H1 (cell line): ENCODE measurements at regions of chr19 and their contacts with region 1.

Region 1: DNA sequence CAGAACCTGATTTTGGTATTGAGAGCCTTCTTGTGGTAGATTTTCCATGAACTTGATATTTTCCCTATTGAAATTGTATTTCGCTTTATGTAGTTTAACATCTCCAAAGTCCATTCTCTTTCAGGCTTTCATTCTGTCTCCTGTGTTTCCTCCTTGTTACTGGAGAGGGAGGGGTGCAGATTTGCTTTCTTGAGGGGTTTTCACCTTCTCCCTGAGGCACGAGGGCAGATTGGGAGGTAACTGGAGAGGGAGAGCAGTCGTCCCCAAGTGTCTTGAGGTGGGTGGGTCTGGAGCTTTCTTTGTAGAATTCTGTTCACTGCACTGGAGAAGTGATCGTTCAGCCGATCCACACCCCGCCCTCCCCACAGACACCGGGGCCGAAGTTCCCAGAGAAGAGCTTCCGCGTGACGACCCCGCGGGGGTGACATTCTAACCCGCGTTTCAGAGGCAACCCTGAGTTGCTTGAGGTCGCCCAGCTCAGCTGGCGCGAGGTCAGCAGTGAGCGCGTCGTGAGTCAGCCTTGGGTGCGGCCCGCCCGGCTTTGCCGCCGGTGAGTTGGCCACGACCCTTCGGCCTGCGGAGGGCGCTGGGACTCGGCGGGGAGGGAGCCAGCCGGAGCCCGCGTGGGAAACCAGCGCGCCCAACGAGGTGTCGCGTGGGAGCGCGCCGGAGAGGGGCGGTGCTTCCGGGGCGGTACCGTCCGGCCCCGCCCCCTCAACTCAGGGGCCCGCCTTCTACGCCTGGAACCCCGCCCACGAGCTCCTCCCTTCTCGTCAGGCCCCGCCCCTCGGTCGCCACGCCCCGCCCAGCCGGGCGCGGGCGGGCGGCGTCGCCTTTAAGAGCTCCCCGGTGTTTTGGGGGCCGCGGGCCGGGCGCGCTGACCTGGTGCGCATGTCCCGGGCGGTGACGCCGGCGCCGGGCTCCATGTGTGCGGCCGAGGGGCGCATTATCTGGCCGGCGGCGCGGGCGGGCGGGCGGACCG is at the start of gene GATAD2A:
- DNase-seq: peak; percentile 66 to 98
- H3K4me3 ChIP-seq: peak within 1 kb of the TSS; percentile 55 to 95 (median 81)
- H3K27ac ChIP-seq: peak within 1 kb of the TSS; percentile 73; the same call in 1 of the 2 replicates
- H3K4me1 ChIP-seq: peaks cover 6 to 23% (median 20%) of the 10 kb centered on the region in 4 experiments; a peak in 6 of 7 replicates
- H3K27me3 ChIP-seq: no peaks in the 10 kb centered on the region
- CTCF ChIP-seq: no peak
- EP300 ChIP-seq: no peak
- POLR2A ChIP-seq: peak; percentile 37 to 75
- RAD21 ChIP-seq: no peak; a peak in 1 of 4 replicates
- total RNA-seq, gene GATAD2A: 205 and 210 TPM in 2 replicates

Region 2: GRCh38 chr19:19292607-19293006 is 112.6 kb before region 1 on chr19:
- CTCF ChIA-PET with region 1: no interaction called
- POLR2A ChIA-PET with region 1: no interaction called
- DNase-seq: no peak
- H3K4me3 ChIP-seq: no peak overlapping the region
- H3K27ac ChIP-seq: no peak overlapping the region
- H3K4me1 ChIP-seq: no peaks in the 10 kb centered on the region
- H3K27me3 ChIP-seq: no peaks in the 10 kb centered on the region
- CTCF ChIP-seq: no peak
- EP300 ChIP-seq: no peak
- POLR2A ChIP-seq: no peak
- RAD21 ChIP-seq: no peak

Region 3: DNA sequence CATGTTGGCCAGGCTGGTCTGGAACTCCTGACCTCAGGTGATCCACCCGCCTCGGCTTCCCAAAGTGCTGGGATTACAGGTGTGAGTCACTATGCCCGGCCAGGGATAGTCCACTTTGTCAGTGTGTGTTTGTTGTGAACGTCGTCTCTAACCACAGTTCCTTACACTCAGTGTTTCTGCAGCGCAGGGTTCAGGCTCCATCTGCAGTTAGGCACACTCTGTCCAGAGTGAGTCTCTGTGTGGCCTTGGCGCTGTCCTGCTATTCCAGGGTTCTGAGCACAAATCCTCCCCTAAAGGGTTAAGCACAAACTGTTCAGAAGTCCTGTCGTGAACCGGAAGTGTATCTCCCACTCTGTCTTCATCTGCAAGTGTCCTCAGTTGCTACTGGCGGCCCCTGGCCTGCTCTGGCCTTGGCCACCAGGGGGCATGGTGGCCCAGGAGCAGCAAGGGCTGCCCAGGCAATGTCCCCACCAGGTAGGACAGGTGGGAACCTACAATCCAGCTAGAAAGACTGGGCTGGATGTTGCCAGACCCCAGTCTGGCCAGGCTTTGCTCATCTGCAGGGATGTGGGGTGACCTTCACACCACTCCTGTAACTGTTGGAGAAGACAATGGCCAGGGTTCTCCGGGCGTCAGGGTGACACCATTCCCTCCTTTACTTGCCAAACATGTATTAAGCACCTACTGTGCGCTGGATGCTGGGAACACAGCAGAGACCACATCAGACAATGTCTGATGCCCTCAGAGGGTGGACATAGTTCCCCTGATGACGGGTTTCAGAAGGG is 38.4 kb before region 1 on chr19:
- CTCF ChIA-PET with region 1: interaction called, 8 read pairs
- POLR2A ChIA-PET with region 1: interaction called, 13 read pairs
- DNase-seq: peak; percentile 79 to 85
- H3K4me3 ChIP-seq: no peak overlapping the region
- H3K27ac ChIP-seq: no peak overlapping the region
- H3K4me1 ChIP-seq: peaks cover 0 to 2% (median 0%) of the 10 kb centered on the region in 4 experiments; a peak in 4 of 7 replicates
- H3K27me3 ChIP-seq: 0 out of 7 replicates have a peak, but pooled peaks cover 0 to 4% (median 0%) of the 10 kb centered on the region in 4 experiments
- CTCF ChIP-seq: peak; percentile 95 to 97 (median 96)
- EP300 ChIP-seq: no peak
- POLR2A ChIP-seq: no peak
- RAD21 ChIP-seq: peak; percentile 93 to 94

Region 4: DNA sequence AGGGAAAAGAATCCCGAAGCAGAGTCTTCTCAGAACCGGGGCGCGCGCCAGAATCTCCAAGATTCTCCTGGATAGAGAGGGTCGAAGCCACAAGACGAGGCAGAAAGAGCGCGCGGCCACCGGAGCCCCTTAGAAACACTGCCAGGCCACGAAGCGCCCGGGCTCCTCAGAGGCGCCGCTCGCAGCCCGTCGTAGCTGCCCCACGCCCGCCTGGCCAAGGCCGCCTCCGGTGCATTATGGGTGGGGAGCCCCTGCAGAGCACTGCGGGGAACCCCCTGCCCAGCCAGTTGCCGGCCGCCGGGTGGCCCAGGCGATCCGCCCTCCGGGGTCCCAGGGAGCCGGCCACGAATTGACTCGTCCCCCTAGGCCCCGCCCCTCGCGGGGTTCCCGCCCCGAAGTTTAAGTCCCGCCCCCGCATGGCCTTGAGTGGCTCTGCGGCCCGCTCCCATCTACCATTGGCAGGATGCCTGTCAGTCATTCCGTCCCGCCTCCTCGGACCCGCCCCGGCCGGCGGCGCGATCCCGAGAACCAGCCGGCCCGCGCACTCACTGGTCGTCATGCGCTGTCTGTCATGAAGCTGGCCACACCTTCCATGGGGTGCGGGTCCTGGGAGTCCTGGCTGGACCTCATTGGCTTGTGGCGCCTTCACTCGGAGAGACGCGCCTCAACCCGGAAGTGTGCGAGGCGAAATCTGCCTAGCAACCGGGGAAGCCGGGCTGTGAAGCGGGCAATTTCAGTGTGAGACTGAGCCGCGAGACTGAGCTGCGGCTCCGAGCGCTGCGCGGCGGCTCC is 19.9 kb before region 1 on chr19:
- CTCF ChIA-PET with region 1: interaction called, 5 read pairs
- POLR2A ChIA-PET with region 1: interaction called, 21 read pairs
- DNase-seq: peak; percentile 99 to 100
- H3K4me3 ChIP-seq: peak overlapping the region; percentile 57 to 96 (median 82)
- H3K27ac ChIP-seq: peak overlapping the region; percentile 62; the same call in 1 of the 2 replicates
- H3K4me1 ChIP-seq: peaks cover 4 to 8% (median 5%) of the 10 kb centered on the region in 4 experiments; a peak in 6 of 7 replicates
- H3K27me3 ChIP-seq: peaks cover 0 to 3% (median 3%) of the 10 kb centered on the region in 4 experiments; a peak in 2 of 7 replicates
- CTCF ChIP-seq: no peak
- EP300 ChIP-seq: no peak
- POLR2A ChIP-seq: peak; percentile 80 to 87
- RAD21 ChIP-seq: no peak

Region 5: DNA sequence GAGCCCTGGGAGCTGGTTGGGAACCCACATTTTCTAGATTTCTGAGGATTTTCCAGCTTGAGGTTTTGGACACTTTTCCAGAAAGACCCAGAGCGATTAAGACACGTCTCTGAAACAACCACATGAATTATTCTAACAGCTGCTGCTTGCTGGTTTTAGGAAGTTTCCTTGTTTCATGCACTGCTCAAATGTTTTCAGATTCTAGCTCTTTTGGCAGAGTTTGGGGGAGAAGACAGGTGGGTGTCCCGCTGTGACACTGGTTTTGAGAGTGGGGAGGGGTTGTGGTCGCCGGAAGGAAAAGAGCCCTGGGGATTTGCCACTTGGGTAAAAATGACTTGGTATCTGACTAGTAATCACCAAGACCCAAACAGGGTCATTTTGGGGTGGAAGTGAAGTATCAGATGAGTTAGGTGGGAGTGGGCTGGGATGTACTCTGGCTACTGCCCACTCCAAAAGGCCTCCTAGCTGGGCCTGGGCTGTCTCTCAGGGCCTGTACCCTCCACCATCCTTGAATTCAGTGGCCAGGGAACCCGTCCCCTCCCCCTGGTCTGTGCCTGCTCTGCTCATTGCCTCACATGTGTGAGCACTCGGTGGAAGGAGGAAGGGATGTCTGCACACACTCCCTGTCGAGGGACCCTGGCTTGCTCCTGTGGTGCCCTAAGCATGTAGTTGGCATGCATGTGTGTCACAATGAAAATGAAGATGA is 13.5 kb after region 1 on chr19:
- CTCF ChIA-PET with region 1: interaction called, 3 read pairs
- POLR2A ChIA-PET with region 1: interaction called, 13 read pairs
- DNase-seq: no peak
- H3K4me3 ChIP-seq: no peak overlapping the region
- H3K27ac ChIP-seq: no peak overlapping the region
- H3K4me1 ChIP-seq: peaks cover 0 to 3% (median under 1%) of the 10 kb centered on the region in 4 experiments; a peak in 3 of 7 replicates
- H3K27me3 ChIP-seq: no peaks in the 10 kb centered on the region
- CTCF ChIP-seq: no peak
- EP300 ChIP-seq: no peak
- POLR2A ChIP-seq: no peak
- RAD21 ChIP-seq: no peak

Region 6: GRCh38 chr19:19460761-19461265 is 55.6 kb after region 1 on chr19:
- CTCF ChIA-PET with region 1: interaction called, 5 read pairs
- POLR2A ChIA-PET with region 1: interaction called, 15 read pairs
- DNase-seq: no peak
- H3K4me3 ChIP-seq: no peak overlapping the region
- H3K27ac ChIP-seq: no peak overlapping the region; the same call in 1 of the 2 replicates
- H3K4me1 ChIP-seq: peaks cover 38 to 58% (median 50%) of the 10 kb centered on the region in 4 experiments
- H3K27me3 ChIP-seq: no peaks in the 10 kb centered on the region; a peak in 1 of 7 replicates
- CTCF ChIP-seq: no peak
- EP300 ChIP-seq: no peak
- POLR2A ChIP-seq: no peak
- RAD21 ChIP-seq: no peak

Region 7: GRCh38 chr19:19562665-19563347 is 157.6 kb after region 1 on chr19:
- CTCF ChIA-PET with region 1: no interaction called
- POLR2A ChIA-PET with region 1: no interaction called
- DNase-seq: peak in 1 of 2 experiments; percentile 53
- H3K4me3 ChIP-seq: no peak overlapping the region
- H3K27ac ChIP-seq: no peak overlapping the region
- H3K4me1 ChIP-seq: peaks cover 0 to 4% (median 0%) of the 10 kb centered on the region in 4 experiments; a peak in 2 of 7 replicates
- H3K27me3 ChIP-seq: no peaks in the 10 kb centered on the region
- CTCF ChIP-seq: peak; percentile 48 to 68 (median 62); a peak in 3 of 4 replicates
- EP300 ChIP-seq: no peak
- POLR2A ChIP-seq: no peak
- RAD21 ChIP-seq: peak; percentile 57 to 67